GM12878 (cell line): ENCODE measurements at regions of chr4 and their contacts with region 1.

Region 1: DNA sequence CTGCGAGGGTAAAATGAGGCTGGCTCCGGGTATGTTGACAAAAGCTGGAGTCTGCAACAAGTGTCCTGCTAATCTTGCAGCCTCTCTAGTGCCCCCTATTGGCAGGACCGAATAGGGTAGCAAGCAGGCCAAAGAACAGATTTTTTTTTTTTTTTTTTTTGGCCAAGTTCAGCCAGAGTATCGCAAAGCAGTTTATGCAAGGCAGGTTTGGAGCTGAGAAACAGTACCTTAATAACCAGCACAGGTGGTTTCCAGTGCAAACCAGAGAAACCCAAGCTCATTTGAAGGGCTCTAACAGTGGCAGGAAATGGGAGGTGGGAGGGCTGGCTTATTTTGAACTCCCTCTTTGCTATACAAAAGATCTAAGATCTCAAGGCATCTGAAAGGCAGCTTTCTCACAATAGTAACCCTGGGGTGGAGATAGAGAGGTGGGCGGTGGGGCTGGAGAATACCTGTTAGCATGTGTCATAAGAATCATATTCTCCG is 38.2 kb upstream of the OCIAD2 start:
- DNase-seq: no peak
- ATAC-seq: peak; percentile 58
- H3K4me3 ChIP-seq: no peak overlapping the region
- H3K27ac ChIP-seq: no peak overlapping the region
- H3K4me1 ChIP-seq: no peaks in the 10 kb centered on the region
- H3K27me3 ChIP-seq: peaks cover 0 to 3% of the 10 kb centered on the region in 2 experiments; a peak in 1 of 4 replicates
- CTCF ChIP-seq: peak; percentile 34 to 69 (median 51)
- EP300 ChIP-seq: no peak
- POLR2A ChIP-seq: no peak
- RAD21 ChIP-seq: peak; percentile 39; the same call in 1 of the 2 replicates

Region 2: GRCh38 chr4:48499551-48500066 is 445.2 kb before region 1 on chr4:
- CTCF ChIA-PET with region 1: no interaction called
- POLR2A ChIA-PET with region 1: no interaction called
- RAD21 ChIA-PET with region 1: no interaction called
- SMC1A ChIA-PET with region 1: no interaction called
- in situ Hi-C with region 1: no loop called
- intact Hi-C with region 1: no loop called
- DNase-seq: peak; percentile 45
- ATAC-seq: peak; percentile 88
- H3K4me3 ChIP-seq: no peak overlapping the region
- H3K27ac ChIP-seq: peak overlapping the region; percentile 28
- H3K4me1 ChIP-seq: peaks cover 17% of the 10 kb centered on the region
- H3K27me3 ChIP-seq: no peaks in the 10 kb centered on the region
- CTCF ChIP-seq: no peak
- EP300 ChIP-seq: peak in 1 of 2 experiments; percentile 75; a peak in 1 of 4 replicates
- POLR2A ChIP-seq: no peak
- RAD21 ChIP-seq: no peak

Region 3: GRCh38 chr4:48931459-48931858 is 13.3 kb before region 1 on chr4:
- CTCF ChIA-PET with region 1: interaction called, 15 read pairs
- POLR2A ChIA-PET with region 1: no interaction called
- RAD21 ChIA-PET with region 1: no interaction called
- SMC1A ChIA-PET with region 1: interaction called, 3 read pairs
- in situ Hi-C with region 1: no loop called
- intact Hi-C with region 1: no loop called
- DNase-seq: no peak
- ATAC-seq: peak; percentile 56
- H3K4me3 ChIP-seq: no peak overlapping the region
- H3K27ac ChIP-seq: no peak overlapping the region
- H3K4me1 ChIP-seq: no peaks in the 10 kb centered on the region
- H3K27me3 ChIP-seq: no peaks in the 10 kb centered on the region
- CTCF ChIP-seq: no peak
- EP300 ChIP-seq: no peak
- POLR2A ChIP-seq: no peak
- RAD21 ChIP-seq: no peak